WTC11 (cell line): ENCODE measurements at regions of chr20 and their contacts with region 1.

Region 1: DNA sequence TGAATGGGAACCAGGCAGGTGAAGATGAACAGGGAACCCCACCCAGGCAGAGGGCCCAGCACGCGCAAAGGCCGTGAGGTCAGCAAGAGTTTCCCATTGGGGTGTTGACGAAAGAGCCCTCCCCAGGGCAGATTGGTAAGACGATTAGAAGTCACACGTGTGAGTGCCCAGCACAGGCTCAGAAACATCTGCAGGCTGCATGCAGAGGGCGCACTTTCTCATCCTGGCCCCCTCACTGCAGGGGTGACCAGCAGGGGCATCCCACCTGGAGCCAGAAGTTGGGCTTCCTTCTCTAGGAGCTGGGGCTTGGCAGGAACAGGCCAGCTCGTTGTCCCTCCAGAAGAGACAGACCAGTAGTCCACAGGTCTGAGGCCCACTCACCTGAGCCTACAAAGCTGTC is 38.4 kb downstream of the VSTM2L start:
- DNase-seq: peak; percentile 50
- ATAC-seq: peak; percentile 59; the same call in 1 of the 2 replicates
- H3K4me3 Mint-ChIP-seq: no peak overlapping the region
- H3K27ac Mint-ChIP-seq: no peak overlapping the region
- H3K4me1 Mint-ChIP-seq: peaks cover 3% of the 10 kb centered on the region; the same call in 1 of the 2 replicates
- H3K27me3 Mint-ChIP-seq: no peaks in the 10 kb centered on the region
- CTCF ChIP-seq: peak; percentile 28; the same call in 1 of the 2 replicates

Region 2: GRCh38 chr20:37925265-37926165 is 15.8 kb before region 1 on chr20:
- CTCF ChIA-PET with region 1: interaction called, 10 read pairs
- POLR2A ChIA-PET with region 1: no interaction called
- DNase-seq: no peak
- ATAC-seq: peak; percentile 86
- H3K4me3 Mint-ChIP-seq: no peak overlapping the region
- H3K27ac Mint-ChIP-seq: no peak overlapping the region
- H3K4me1 Mint-ChIP-seq: peaks cover 17% of the 10 kb centered on the region
- H3K27me3 Mint-ChIP-seq: no peaks in the 10 kb centered on the region; the same call in 1 of the 2 replicates
- CTCF ChIP-seq: no peak

Region 3: DNA sequence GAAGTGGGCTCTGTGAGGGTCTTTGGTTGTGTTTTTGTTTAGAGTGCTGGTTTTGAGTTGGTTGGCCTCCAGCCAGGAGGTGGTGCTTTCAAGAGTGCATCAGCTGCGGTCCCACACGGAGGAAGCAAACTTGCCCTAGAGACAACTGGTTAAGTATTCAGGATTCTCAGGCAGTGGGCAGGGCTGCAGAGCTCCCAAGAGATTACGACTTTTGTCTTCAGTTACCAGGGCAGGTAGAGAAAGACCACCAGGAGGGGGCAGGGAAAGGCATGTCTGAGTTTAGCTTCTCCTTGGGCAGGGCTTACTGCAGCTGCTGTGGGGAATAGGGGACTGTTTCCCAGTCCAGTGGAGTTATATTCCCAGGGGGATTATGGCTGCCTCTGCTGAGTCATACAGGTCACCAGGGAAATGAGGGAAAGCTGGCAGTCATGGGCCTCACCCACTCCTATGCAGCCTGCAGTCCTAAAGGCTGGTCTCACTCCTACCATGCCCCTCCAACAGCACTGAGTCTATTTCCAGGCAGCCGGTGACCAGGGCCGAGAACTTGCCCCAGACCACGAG is 27.6 kb after region 1 on chr20:
- CTCF ChIA-PET with region 1: interaction called, 11 read pairs
- POLR2A ChIA-PET with region 1: no interaction called
- DNase-seq: no peak
- ATAC-seq: peak; percentile 75
- H3K4me3 Mint-ChIP-seq: no peak overlapping the region
- H3K27ac Mint-ChIP-seq: peak overlapping the region; percentile 4; the same call in 1 of the 2 replicates
- H3K4me1 Mint-ChIP-seq: peaks cover 43% of the 10 kb centered on the region
- H3K27me3 Mint-ChIP-seq: peaks cover 55% of the 10 kb centered on the region
- CTCF ChIP-seq: no peak